T-cell (primary cell): ENCODE measurements at regions of chr12 and their contacts with region 1.

Region 1: DNA sequence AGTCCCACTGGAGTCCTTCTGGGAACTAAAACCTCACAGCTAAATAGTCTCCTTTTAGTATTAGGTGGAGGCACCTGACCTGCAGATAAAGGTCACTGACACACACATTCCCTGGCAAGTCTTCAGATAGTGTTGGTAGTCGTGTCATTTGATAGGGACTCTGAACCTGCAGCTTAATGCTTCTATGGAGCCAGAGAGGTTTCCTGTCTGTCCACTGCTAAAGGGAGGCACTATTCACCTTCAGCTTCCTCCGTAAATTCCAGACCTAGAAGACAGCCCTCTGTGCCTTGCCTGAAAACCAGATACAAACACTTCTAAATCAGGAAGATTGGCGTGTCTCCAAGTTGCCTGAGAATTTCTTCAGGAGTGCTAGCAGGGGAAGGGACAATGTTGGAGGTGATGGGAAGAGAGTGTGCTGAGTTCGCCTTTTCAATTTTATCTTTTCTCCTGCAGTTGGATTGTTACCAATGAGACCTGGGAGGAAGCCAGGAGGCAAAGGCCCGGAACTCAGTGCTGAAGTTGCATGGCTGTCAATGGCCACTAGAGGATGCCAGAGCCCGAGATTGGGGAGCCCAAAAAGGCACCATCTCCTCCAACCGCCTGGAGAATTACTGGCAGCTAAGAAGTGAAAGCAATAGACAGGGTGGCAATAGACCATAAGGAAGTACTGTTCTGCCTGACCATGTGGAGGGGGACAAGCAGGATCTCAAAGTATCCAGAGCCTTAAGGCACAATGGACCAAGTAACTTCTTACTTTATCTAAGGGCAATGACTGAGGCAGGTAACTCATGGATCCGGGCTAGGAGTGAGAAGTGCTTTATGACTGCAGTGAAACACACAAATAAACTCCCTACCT is 81.6 kb upstream of the SCAF11 start:
- DNase-seq: peak; percentile 23 to 74 (median 50)
- ATAC-seq: peak; percentile 73 to 87 (median 78)
- H3K4me3 ChIP-seq: no peak overlapping the region
- H3K4me3 Mint-ChIP-seq: no peak overlapping the region
- H3K27ac ChIP-seq: no peak overlapping the region
- H3K27ac Mint-ChIP-seq: no peak overlapping the region
- H3K4me1 ChIP-seq: peaks cover 0 to 2% of the 10 kb centered on the region in 2 experiments
- H3K4me1 Mint-ChIP-seq: peaks cover 6 to 9% (median 8%) of the 10 kb centered on the region in 3 donors
- H3K27me3 ChIP-seq: peaks cover 0 to under 1% of the 10 kb centered on the region in 2 experiments
- H3K27me3 Mint-ChIP-seq: peaks cover 3 to 8% of the 10 kb centered on the region in 2 donors

Region 2: DNA sequence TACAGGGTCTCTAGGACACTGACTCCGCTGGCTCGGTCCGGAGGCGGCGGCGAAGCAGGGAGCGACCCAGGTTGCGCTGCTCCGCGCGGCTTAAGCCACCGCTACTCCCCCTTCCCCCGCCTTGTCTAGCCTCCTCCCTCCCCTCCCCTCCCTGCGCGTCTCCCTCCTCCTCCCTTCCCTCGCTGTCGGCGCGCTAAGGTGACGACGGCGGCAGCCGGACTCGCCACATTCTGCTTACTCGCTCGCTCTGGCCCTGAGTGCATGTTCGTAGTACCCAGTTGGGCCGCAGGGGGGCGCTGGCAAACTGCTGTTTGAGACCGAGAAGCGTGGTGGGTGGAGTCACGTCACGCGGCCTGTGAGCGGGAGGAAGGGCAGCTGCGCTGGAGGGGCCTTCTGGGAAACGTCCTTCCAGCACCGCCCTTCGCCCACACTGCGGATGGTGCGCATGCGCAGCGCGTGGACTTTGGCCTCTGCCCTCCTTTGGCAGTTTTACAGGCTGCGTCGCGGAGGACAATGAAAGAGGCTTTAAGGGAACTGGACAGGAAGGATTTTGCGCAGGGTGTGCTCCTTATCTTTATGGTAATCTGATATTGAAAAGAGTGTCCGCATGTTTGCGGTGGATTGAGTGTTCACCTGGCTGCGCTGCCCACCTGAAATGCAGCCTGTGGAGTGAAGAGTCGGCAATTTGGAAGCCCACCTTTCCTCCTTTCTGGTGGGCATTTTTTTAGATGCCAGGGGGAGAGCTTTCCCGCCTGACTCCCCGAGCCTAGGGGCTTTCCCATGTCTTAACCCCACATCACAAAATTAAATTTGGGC is 81.3 kb before region 1 on chr12 and contains the start of gene SCAF11:
- CTCF ChIA-PET with region 1: interaction called, 3 to 5 read pairs
- POLR2A ChIA-PET with region 1: interaction called, 3 to 10 read pairs
- DNase-seq: peak; percentile 100
- ATAC-seq: peak; percentile 76 to 91 (median 79)
- H3K4me3 ChIP-seq: peak within 1 kb of the TSS; percentile 96 to 99
- H3K4me3 Mint-ChIP-seq: peak within 1 kb of the TSS; percentile 86 to 97 (median 97)
- H3K27ac ChIP-seq: peak within 1 kb of the TSS; percentile 99
- H3K27ac Mint-ChIP-seq: peak within 1 kb of the TSS; percentile 98 to 99
- H3K4me1 ChIP-seq: peaks cover 13 to 26% of the 10 kb centered on the region in 2 experiments
- H3K4me1 Mint-ChIP-seq: peaks cover 48 to 52% (median 49%) of the 10 kb centered on the region in 3 donors
- H3K27me3 ChIP-seq: no peaks in the 10 kb centered on the region
- H3K27me3 Mint-ChIP-seq: no peaks in the 10 kb centered on the region
- total RNA-seq, gene SCAF11: 149 to 184 (median 163) TPM